Activated CD4-positive, alpha-beta T cell treated with anti-CD3 and anti-CD28 coated beads for 36 hours (primary cell): ENCODE measurements at regions of chr5 and their contacts with region 1.

Region 1: DNA sequence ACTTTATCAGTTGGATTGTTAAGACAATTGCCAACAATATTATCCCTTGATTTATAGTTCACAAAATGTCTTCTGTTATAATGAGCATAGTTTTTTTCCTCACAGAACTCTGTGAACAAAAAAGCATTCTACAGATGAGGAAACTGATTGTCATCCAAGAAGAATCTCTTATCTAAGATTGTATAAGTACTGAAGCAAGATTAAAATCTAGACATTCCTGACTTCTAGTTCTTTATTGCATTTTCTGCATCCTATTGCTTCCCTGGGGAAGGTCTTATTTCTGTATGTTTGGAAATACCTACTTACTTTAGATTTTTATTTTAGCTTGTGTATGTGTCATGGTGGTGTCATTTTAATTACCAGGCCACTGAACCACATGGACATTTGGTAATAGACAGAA is 884.9 kb upstream of the WWC1 start:
- DNase-seq: no peak
- ATAC-seq: no peak
- H3K4me3 Mint-ChIP-seq: no peak overlapping the region
- H3K27ac Mint-ChIP-seq: no peak overlapping the region
- H3K4me1 Mint-ChIP-seq: no peaks in the 10 kb centered on the region
- H3K27me3 Mint-ChIP-seq: no peaks in the 10 kb centered on the region

Region 2: DNA sequence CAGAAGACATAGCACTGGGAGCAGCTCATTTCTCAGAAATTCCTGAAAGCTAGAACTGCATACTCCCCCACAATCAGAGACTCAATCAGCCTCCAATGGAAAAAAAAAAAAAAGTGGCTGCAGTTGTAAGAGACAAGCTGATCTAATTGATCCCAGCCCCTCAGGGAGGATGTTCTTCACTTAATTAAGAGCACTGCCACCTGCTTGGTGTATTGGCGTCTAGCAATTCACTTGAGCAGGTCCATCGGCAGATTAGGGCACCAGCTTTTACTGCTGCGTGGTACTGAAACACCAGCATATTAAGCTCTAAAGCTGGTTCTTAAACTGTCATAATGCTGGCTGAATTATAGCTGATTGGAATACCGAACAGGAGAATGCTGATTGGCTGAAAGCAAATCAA is 1005.1 kb before region 1 on chr5:
- CTCF ChIA-PET with region 1: no interaction called
- POLR2A ChIA-PET with region 1: interaction called, 10 read pairs
- intact Hi-C with region 1: no loop called
- DNase-seq: no peak
- ATAC-seq: no peak
- H3K4me3 Mint-ChIP-seq: no peak overlapping the region
- H3K27ac Mint-ChIP-seq: no peak overlapping the region
- H3K4me1 Mint-ChIP-seq: no peaks in the 10 kb centered on the region
- H3K27me3 Mint-ChIP-seq: no peaks in the 10 kb centered on the region

Region 3: GRCh38 chr5:167389537-167389936 is 17.0 kb before region 1 on chr5:
- CTCF ChIA-PET with region 1: no interaction called
- POLR2A ChIA-PET with region 1: no interaction called
- intact Hi-C with region 1: no loop called
- DNase-seq: no peak
- ATAC-seq: no peak
- H3K4me3 Mint-ChIP-seq: no peak overlapping the region
- H3K27ac Mint-ChIP-seq: no peak overlapping the region
- H3K4me1 Mint-ChIP-seq: no peaks in the 10 kb centered on the region
- H3K27me3 Mint-ChIP-seq: no peaks in the 10 kb centered on the region